WTC11 (cell line): ENCODE measurements at regions of chr19 and their contacts with region 1.

Region 1: GRCh38 chr19:35509861-35510625 is 3.4 kb downstream of the DMKN start:
- DNase-seq: peak; percentile 97
- ATAC-seq: peak; percentile 85
- H3K4me3 Mint-ChIP-seq: peak overlapping the region; percentile 99
- H3K27ac Mint-ChIP-seq: peak overlapping the region; percentile 97
- H3K4me1 Mint-ChIP-seq: peaks cover 24% of the 10 kb centered on the region
- H3K27me3 Mint-ChIP-seq: peaks cover 20% of the 10 kb centered on the region
- CTCF ChIP-seq: peak; percentile 98

Region 2: GRCh38 chr19:35224681-35225571 is 285.1 kb before region 1 on chr19:
- CTCF ChIA-PET with region 1: no interaction called
- POLR2A ChIA-PET with region 1: no interaction called
- DNase-seq: peak; percentile 70
- ATAC-seq: peak; percentile 84
- H3K4me3 Mint-ChIP-seq: peak overlapping the region; percentile 40
- H3K27ac Mint-ChIP-seq: no peak overlapping the region
- H3K4me1 Mint-ChIP-seq: peaks cover 21% of the 10 kb centered on the region
- H3K27me3 Mint-ChIP-seq: peaks cover 8% of the 10 kb centered on the region
- CTCF ChIP-seq: peak; percentile 23; the same call in 1 of the 2 replicates

Region 3: DNA sequence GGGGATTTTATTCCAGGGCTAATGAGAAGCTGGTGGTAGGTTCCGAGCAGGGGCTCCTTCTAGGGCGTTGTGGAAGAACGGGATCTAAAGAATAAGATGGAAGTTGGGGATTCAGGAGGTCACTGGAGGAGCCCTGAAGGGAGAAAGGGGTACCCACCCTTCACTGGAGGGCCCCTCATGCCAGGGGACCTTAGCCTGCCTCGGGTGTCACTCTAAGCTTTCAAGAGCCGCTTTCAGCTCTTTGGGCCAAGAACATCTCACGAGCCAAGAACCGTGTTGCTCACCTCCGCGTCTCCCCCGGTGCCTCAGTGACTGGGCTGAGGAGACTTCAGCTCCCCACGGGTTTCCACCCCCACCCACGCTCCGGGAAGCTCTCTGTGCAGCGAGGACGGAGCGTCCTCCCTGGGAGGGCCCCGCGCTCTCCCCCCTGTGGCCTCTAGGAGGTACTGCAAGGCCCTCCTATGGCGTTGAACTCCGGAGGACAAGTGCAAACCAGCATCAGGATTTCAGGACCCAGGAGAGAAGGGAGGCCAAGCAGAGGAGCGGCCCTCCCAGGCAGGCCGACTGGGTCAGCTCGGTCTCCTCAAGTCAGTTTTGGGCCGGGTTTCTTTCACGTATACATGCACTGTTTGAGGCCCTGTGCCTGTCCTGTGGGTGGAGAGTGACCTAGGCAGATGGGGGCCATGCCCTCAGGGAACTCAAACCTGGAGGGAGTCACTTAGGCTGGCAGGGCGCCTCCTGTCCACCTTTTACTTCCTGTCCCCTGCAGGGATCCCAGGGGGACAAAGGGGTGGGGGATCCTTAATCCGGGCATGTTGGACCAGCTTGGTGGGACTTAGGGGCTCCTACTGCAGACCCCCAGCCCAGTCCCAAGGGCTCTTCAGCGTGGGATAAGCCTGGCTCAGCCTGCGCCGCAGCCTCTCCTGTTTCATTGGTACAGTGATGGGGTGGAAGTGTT is 14.7 kb before region 1 on chr19:
- CTCF ChIA-PET with region 1: interaction called, 33 read pairs
- POLR2A ChIA-PET with region 1: interaction called, 4 read pairs
- DNase-seq: peak; percentile 68
- ATAC-seq: peak; percentile 92
- H3K4me3 Mint-ChIP-seq: no peak overlapping the region
- H3K27ac Mint-ChIP-seq: peak overlapping the region; percentile 52; the same call in 1 of the 2 replicates
- H3K4me1 Mint-ChIP-seq: peaks cover 9% of the 10 kb centered on the region
- H3K27me3 Mint-ChIP-seq: peaks cover 13% of the 10 kb centered on the region
- CTCF ChIP-seq: peak; percentile 91

Region 4: GRCh38 chr19:35533822-35534521 is 23.9 kb after region 1 on chr19:
- CTCF ChIA-PET with region 1: interaction called, 12 read pairs
- POLR2A ChIA-PET with region 1: interaction called, 5 read pairs
- DNase-seq: peak; percentile 65
- ATAC-seq: peak; percentile 76
- H3K4me3 Mint-ChIP-seq: peak overlapping the region; percentile 57
- H3K27ac Mint-ChIP-seq: 0 out of 2 replicates have a peak overlapping the region, but pooled peaks have one; percentile 25
- H3K4me1 Mint-ChIP-seq: peaks cover 27% of the 10 kb centered on the region
- H3K27me3 Mint-ChIP-seq: peaks cover 30% of the 10 kb centered on the region
- CTCF ChIP-seq: no peak

Region 5: GRCh38 chr19:35557539-35558399 is 47.7 kb after region 1 on chr19:
- CTCF ChIA-PET with region 1: interaction called, 62 read pairs
- POLR2A ChIA-PET with region 1: interaction called, 4 read pairs
- DNase-seq: peak; percentile 100
- ATAC-seq: peak; percentile 86
- H3K4me3 Mint-ChIP-seq: peak overlapping the region; percentile 87
- H3K27ac Mint-ChIP-seq: peak overlapping the region; percentile 55; the same call in 1 of the 2 replicates
- H3K4me1 Mint-ChIP-seq: peaks cover 12% of the 10 kb centered on the region
- H3K27me3 Mint-ChIP-seq: peaks cover 55% of the 10 kb centered on the region
- CTCF ChIP-seq: no peak

Region 6: GRCh38 chr19:35618857-35619256 is 108.8 kb after region 1 on chr19:
- CTCF ChIA-PET with region 1: interaction called, 11 read pairs
- POLR2A ChIA-PET with region 1: no interaction called
- DNase-seq: peak; percentile 52
- ATAC-seq: peak; percentile 77
- H3K4me3 Mint-ChIP-seq: no peak overlapping the region
- H3K27ac Mint-ChIP-seq: no peak overlapping the region
- H3K4me1 Mint-ChIP-seq: no peaks in the 10 kb centered on the region
- H3K27me3 Mint-ChIP-seq: no peaks in the 10 kb centered on the region
- CTCF ChIP-seq: no peak

Region 7: GRCh38 chr19:35734889-35735288 is 224.8 kb after region 1 on chr19:
- CTCF ChIA-PET with region 1: no interaction called
- POLR2A ChIA-PET with region 1: no interaction called
- DNase-seq: no peak
- ATAC-seq: no peak
- H3K4me3 Mint-ChIP-seq: no peak overlapping the region
- H3K27ac Mint-ChIP-seq: peak overlapping the region; percentile 57; the same call in 1 of the 2 replicates
- H3K4me1 Mint-ChIP-seq: peaks cover 2% of the 10 kb centered on the region; the same call in 1 of the 2 replicates
- H3K27me3 Mint-ChIP-seq: no peaks in the 10 kb centered on the region
- CTCF ChIP-seq: no peak